Breast epithelium (tissue), 4 donors: ENCODE measurements at regions of chr12 and their contacts with region 1.

Region 1: GRCh38 chr12:115650026-115650425 is 627.5 kb downstream of the MED13L start:
- DNase-seq: no peak
- H3K4me3 ChIP-seq: no peak overlapping the region
- H3K27ac ChIP-seq: no peak overlapping the region
- H3K4me1 ChIP-seq: no peaks in the 10 kb centered on the region
- H3K27me3 ChIP-seq: no peaks in the 10 kb centered on the region
- CTCF ChIP-seq: no peak
- POLR2A ChIP-seq: no peak

Region 2: DNA sequence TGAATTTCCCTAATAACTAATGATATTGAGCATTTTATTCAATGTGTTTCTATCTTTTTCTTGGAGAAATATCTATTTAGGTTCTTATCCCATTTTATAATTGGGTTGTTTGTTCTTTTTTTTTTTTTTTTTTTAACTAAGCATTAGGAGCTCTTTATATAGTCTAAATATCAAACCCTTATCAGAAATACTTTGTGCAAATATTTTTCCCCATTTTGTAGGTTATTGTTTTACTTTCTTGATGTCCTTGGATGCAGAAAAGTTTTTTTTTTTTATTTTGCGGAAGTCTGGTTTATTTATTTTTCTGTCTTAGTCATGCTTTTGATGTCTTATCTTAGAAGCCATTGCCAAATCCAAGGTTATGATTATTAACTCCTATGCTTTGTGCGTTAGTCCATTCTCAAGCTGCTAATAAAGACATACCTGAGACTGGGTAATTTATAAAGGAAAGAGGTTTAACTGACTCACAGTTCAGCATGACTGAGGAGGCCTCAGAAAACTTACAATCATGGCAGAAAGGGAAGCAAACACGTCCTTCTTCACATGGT is 531.8 kb before region 1 on chr12:
- intact Hi-C with region 1: loop called (anchors 5 kb)
- DNase-seq: no peak
- H3K4me3 ChIP-seq: no peak overlapping the region
- H3K27ac ChIP-seq: no peak overlapping the region
- H3K4me1 ChIP-seq: no peaks in the 10 kb centered on the region
- H3K27me3 ChIP-seq: no peaks in the 10 kb centered on the region
- CTCF ChIP-seq: no peak
- POLR2A ChIP-seq: no peak